Stomach (tissue), 19 donors: ENCODE measurements at regions of chr11 and their contacts with region 1.

Region 1: DNA sequence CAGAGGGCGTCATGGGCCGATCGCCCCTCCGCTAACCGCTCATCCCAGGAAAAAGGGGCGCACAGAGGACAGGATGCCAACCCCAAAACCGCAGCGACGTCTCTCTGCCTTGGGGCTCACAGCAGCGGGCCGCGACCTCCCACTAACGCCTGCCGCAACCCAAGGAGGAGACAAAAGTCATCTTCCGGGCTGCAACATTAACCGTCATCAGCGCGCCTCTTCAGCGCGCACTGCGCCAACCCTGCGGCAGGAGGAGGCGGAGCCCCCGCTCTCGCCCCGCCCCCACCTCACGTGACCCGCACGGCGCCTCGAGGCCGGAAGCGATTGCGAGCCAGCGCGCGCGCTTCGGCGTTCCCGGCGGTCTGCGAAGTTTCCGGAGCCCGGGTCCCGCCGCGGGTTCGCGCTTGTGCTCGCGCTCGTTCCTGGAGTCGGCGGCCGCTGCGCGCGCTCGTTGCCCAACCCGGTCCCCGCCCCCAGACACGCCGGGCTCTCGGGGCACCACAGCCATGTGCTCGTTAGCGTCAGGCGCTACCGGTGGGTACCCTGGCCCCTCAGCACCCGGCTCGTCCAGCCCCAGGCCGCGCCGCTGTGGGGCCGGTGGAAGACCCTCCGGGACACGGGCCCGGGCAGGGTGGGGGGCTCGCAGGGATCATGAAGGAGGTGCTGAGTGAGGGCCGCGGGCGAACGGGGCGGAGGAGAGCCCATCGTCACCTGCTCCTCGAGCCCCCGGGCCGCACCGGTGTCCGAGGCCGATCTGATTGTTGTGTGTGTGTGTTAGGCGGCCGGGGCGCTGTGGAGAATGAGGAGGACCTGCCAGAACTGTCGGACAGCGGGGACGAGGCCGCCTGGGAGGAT is at the start of gene PRMT3:
- DNase-seq: peak; percentile 97 to 99
- H3K4me3 ChIP-seq: peak within 1 kb of the TSS; percentile 84 to 94 (median 90)
- H3K27ac ChIP-seq: peak within 1 kb of the TSS; percentile 90 to 96 (median 94)
- H3K4me1 ChIP-seq: peaks cover 6 to 25% (median 16%) of the 10 kb centered on the region in 4 donors
- H3K27me3 ChIP-seq: no peaks in the 10 kb centered on the region
- CTCF ChIP-seq: peak in 4 of 7 experiments; percentile 38 to 99 (median 98)
- EP300 ChIP-seq: peak; percentile 22
- POLR2A ChIP-seq: peak in 1 of 4 donors; percentile 50
- total RNA-seq, gene PRMT3: 9.0 to 54.5 (median 11.2) TPM

Region 2: DNA sequence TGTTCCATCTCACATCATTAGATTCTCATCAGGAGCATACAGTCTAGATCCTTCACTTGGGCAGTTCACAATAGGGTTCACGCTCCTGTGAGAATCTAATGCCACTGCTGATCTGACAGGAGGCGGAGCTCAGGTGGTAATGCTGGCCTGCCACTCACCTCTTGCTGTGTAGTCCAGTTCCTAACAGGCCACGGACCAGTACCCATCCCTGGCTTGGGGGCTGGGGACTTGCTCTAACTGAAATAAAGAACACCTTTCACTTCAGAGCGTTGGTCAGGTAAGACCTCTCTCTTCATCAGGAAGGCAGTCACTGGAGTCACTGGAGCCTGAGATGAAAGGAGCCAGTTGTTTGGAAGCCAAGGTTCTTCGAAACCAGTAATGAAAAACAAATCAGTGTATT is 41.7 kb after region 1 on chr11:
- intact Hi-C with region 1: no loop called
- DNase-seq: no peak
- H3K4me3 ChIP-seq: no peak overlapping the region
- H3K27ac ChIP-seq: no peak overlapping the region
- H3K4me1 ChIP-seq: no peaks in the 10 kb centered on the region
- H3K27me3 ChIP-seq: no peaks in the 10 kb centered on the region
- CTCF ChIP-seq: no peak
- EP300 ChIP-seq: no peak
- POLR2A ChIP-seq: no peak

Region 3: DNA sequence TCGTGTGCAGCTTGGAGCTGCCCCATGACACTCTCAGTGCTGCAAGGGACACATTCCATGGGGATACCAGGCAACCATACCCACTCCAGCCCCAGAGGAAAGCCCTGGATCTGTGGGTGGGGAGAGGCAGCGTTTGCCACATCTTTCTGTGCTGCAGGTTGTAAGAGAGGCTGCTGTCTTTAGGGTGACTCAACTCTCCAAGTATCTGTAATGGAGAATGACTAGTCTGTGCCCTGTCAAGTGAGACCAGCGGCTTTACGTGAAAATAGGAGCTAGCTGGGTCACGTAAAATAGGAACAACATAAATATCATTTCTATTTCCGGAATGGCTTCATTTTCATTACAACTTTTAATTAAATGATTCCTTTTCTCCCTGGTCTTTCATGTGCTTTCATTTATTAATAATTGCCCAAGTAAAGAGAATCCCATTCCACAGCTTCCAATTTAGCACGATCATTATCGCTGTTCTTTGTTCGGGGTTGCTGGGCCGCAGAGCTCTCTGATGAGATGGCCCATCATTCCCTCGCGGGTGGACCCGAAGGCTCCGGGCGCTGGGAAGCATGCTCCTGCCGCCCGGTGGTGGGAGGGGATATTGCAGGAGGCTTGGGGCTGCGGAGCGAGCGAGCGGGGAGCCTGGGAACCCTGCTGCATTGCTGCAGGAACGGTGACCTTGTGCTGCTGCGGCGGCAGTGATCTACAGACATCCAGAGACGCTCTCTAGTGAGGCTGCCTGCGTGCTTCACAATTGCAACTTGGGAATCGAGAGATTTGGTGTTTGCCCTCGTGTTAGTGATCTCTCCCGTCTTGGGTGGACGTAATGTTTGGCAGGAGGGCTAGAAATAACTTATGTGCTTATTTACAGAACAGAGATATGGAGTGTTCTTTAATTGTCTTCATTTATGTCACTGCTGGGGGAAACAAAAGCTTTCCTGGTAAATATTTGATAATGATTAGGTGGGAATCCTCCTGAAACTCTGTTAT is 222.5 kb after region 1 on chr11:
- intact Hi-C with region 1: loop called (anchors 10 kb)
- DNase-seq: peak; percentile 81 to 88
- H3K4me3 ChIP-seq: peak overlapping the region in 1 of 4 donors; percentile 15
- H3K27ac ChIP-seq: no peak overlapping the region
- H3K4me1 ChIP-seq: peaks cover 0 to 14% (median 10%) of the 10 kb centered on the region in 4 donors
- H3K27me3 ChIP-seq: peaks cover 0 to 83% (median 54%) of the 10 kb centered on the region in 3 donors
- CTCF ChIP-seq: peak in 5 of 7 experiments; percentile 80 to 95 (median 89)
- EP300 ChIP-seq: no peak
- POLR2A ChIP-seq: no peak